ENCODE measurements at regions of chr17 and their contacts with region 1.

Region 1: DNA sequence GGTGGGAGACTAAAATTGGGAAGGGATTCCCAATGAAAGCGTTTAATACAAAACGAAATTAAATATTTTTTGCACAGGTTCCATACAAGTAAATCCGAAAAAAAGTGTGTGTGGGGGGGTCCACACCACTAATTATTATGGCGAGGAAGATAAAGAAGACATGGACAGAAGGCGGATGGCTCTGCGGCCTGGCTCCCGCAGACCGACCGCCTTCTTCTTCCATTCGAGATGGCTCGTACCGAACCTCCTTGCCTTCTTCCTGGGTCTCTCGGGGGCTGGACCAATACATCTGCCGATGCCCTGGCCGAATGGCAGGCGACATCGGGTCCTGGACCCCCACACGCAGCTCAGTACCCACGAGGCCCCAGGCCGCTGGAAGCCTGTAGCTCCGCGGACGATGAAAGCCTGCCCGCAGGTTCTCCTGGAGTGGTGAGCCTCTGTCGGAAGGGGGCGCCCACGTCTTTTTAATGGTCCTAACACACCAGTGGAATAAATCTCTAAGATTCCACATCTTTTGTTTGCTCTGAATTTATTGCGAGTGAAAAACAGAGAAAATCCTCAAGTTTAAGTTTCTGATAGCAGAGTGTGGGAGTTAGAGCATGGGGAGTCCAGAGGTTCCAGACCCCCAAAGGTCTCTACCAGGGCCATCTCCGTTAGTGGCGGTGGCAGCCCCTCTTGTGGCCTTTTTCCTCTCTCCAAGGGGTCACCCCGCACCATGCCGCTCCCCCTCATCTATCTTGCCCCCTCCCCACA is 1.4 kb downstream of the PRAC2 start:
- DNase-seq: peak; percentile 86
- ATAC-seq: no peak
- H3K4me3 Mint-ChIP-seq: peak overlapping the region; percentile 70
- H3K27ac Mint-ChIP-seq: no peak overlapping the region
- H3K4me1 Mint-ChIP-seq: peaks cover 50% of the 10 kb centered on the region
- H3K27me3 Mint-ChIP-seq: peaks cover 100% of the 10 kb centered on the region
- CTCF ChIP-seq: peak; percentile 49; the same call in 1 of the 2 replicates

Region 2: GRCh38 chr17:48642439-48643263 is 81.8 kb before region 1 on chr17:
- CTCF ChIA-PET with region 1: interaction called, 25 read pairs
- POLR2A ChIA-PET with region 1: no interaction called
- DNase-seq: peak; percentile 80
- ATAC-seq: peak; percentile 68
- H3K4me3 Mint-ChIP-seq: peak overlapping the region; percentile 56
- H3K27ac Mint-ChIP-seq: no peak overlapping the region
- H3K4me1 Mint-ChIP-seq: peaks cover 27% of the 10 kb centered on the region
- H3K27me3 Mint-ChIP-seq: peaks cover 100% of the 10 kb centered on the region; the same call in 1 of the 2 replicates
- CTCF ChIP-seq: no peak

Region 3: DNA sequence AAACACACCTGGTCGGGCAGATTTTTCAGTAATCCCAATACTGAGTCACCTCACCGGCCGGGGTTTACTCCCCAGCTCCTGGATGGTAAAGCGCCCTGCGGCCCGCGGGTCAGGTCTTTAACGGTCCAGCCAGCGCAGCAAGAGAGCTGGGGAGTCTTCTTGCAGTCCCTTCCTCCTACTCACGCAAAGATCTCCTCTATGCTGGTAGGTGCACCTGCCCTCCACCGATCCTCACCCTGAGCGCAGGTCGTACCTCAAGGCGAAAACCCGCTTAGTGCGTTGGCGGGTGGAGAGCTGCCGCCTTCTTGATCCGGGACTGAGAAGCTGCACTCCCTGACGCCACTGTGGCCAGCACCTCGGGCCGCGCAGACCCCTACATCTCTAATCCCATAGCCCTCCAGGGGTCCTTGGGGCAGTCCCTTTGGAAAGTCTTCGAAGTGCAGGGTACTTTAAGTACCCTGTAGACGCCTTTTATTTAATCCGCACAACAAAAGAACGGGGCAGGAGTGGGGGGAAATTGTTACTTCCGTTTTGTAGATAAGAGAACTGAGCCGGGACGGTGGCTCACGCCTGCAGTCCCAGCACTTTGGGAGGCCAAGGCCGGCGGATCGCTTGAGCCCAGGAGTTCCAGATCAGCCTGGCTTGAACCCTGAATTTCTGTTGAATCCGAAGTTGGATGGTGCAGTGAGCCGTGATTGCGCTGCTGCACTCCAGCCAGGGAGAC is 14.5 kb after region 1 on chr17:
- CTCF ChIA-PET with region 1: interaction called, 70 read pairs
- POLR2A ChIA-PET with region 1: no interaction called
- DNase-seq: no peak
- ATAC-seq: peak; percentile 68
- H3K4me3 Mint-ChIP-seq: peak overlapping the region; percentile 56
- H3K27ac Mint-ChIP-seq: no peak overlapping the region
- H3K4me1 Mint-ChIP-seq: peaks cover 15% of the 10 kb centered on the region
- H3K27me3 Mint-ChIP-seq: peaks cover 100% of the 10 kb centered on the region
- CTCF ChIP-seq: no peak

Region 4: GRCh38 chr17:48756830-48757251 is 32.4 kb after region 1 on chr17:
- CTCF ChIA-PET with region 1: interaction called, 25 read pairs
- POLR2A ChIA-PET with region 1: no interaction called
- DNase-seq: no peak
- ATAC-seq: no peak
- H3K4me3 Mint-ChIP-seq: no peak overlapping the region
- H3K27ac Mint-ChIP-seq: no peak overlapping the region
- H3K4me1 Mint-ChIP-seq: peaks cover 16% of the 10 kb centered on the region
- H3K27me3 Mint-ChIP-seq: peaks cover 99% of the 10 kb centered on the region
- CTCF ChIP-seq: no peak

Region 5: GRCh38 chr17:48791128-48792032 is 67.0 kb after region 1 on chr17:
- CTCF ChIA-PET with region 1: interaction called, 127 read pairs
- POLR2A ChIA-PET with region 1: interaction called, 4 read pairs
- DNase-seq: peak; percentile 85
- ATAC-seq: peak; percentile 92
- H3K4me3 Mint-ChIP-seq: no peak overlapping the region
- H3K27ac Mint-ChIP-seq: no peak overlapping the region
- H3K4me1 Mint-ChIP-seq: peaks cover 9% of the 10 kb centered on the region
- H3K27me3 Mint-ChIP-seq: peaks cover 2% of the 10 kb centered on the region; the same call in 1 of the 2 replicates
- CTCF ChIP-seq: peak; percentile 45; the same call in 1 of the 2 replicates

Region 6: GRCh38 chr17:48816774-48817590 is 92.6 kb after region 1 on chr17 and contains the start of gene TTLL6:
- CTCF ChIA-PET with region 1: interaction called, 19 read pairs
- POLR2A ChIA-PET with region 1: interaction called, 3 read pairs
- DNase-seq: peak; percentile 97
- ATAC-seq: peak; percentile 95
- H3K4me3 Mint-ChIP-seq: peak within 1 kb of the TSS; percentile 94
- H3K27ac Mint-ChIP-seq: peak within 1 kb of the TSS; percentile 92
- H3K4me1 Mint-ChIP-seq: peaks cover 44% of the 10 kb centered on the region
- H3K27me3 Mint-ChIP-seq: peaks cover 5% of the 10 kb centered on the region; the same call in 1 of the 2 replicates
- CTCF ChIP-seq: no peak
- total RNA-seq, gene TTLL6: 3.4 to 7.0 TPM (median 4.6 TPM) in 3 replicates

Region 7: GRCh38 chr17:48901241-48901640 is 176.8 kb after region 1 on chr17:
- CTCF ChIA-PET with region 1: no interaction called
- POLR2A ChIA-PET with region 1: no interaction called
- DNase-seq: no peak
- ATAC-seq: 0 out of 2 replicates have a peak, but pooled peaks have one; percentile 29
- H3K4me3 Mint-ChIP-seq: no peak overlapping the region
- H3K27ac Mint-ChIP-seq: no peak overlapping the region
- H3K4me1 Mint-ChIP-seq: no peaks in the 10 kb centered on the region
- H3K27me3 Mint-ChIP-seq: no peaks in the 10 kb centered on the region
- CTCF ChIP-seq: no peak

Measured in WTC11 (cell line).